Ascending aorta (tissue), 2 donors: ENCODE measurements at regions of chrX and their contacts with region 1.

Region 1: GRCh38 chrX:151396825-151397740 is at the start of gene VMA21:
- DNase-seq: peak; percentile 49 to 92
- H3K4me3 ChIP-seq: peak within 1 kb of the TSS; percentile 75 to 82
- H3K27ac ChIP-seq: peak within 1 kb of the TSS; percentile 87 to 94
- H3K4me1 ChIP-seq: no peaks in the 10 kb centered on the region
- H3K27me3 ChIP-seq: no peaks in the 10 kb centered on the region
- CTCF ChIP-seq: no peak
- total RNA-seq, gene VMA21: 10.0 TPM

Region 2: DNA sequence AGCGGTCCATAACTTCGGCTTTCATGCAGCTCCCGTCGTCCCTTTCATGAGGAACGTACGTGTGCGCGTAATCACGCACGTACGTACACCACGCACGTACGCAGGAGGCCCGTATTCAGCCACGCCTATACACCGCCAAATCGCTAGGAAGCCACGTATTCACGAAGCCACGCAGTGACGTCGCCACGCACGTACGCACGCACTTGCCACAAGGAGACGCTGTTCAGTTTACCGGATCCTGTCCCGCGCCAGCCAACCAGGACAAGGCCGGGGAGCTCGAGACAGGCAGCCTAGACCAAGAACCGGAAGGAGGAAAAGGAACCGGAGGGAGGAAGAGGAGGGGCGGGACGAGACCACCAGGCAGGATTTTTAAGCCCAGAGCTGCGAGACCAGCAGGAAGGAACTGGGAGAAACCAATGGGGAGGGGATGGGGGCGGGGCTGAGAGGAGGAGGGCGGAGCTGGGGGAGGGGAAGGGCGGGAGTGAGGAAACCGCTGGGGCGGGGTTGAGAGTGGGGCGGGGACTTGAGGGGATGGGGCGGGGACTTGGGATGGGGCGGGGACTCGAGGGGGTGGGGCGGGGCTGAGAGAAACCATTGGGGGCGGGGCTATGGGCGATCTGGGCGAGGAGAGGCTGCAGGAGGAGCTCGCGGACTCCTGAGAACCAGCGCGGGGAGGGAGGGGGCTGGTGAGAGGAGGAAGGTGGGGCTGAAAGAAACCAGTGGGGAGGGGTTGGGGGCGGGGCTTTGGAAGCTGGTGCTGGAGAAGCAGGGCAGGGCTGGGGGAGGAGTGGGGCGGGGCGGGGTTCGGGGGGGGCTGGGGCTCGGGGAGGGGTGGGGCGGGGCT is 1458.4 kb before region 1 on chrX and contains the start of gene EOLA2:
- intact Hi-C with region 1: loop called (anchors 10 kb)
- DNase-seq: peak; percentile 91 to 97
- H3K4me3 ChIP-seq: peak within 1 kb of the TSS; percentile 52 to 77
- H3K27ac ChIP-seq: peak within 1 kb of the TSS; percentile 91 to 96
- H3K4me1 ChIP-seq: peaks cover 0 to 4% of the 10 kb centered on the region in 2 donors
- H3K27me3 ChIP-seq: no peaks in the 10 kb centered on the region
- CTCF ChIP-seq: peak; percentile 36 to 56 (median 54)
- total RNA-seq, gene EOLA2: 22.8 TPM

Region 3: GRCh38 chrX:150693775-150694574 is 703.1 kb before region 1 on chrX:
- intact Hi-C with region 1: loop called (anchors 10 kb)
- DNase-seq: peak in 1 of 2 donors; percentile 77
- H3K4me3 ChIP-seq: peak overlapping the region; percentile 66 to 72
- H3K27ac ChIP-seq: peak overlapping the region; percentile 91 to 93
- H3K4me1 ChIP-seq: no peaks in the 10 kb centered on the region
- H3K27me3 ChIP-seq: no peaks in the 10 kb centered on the region
- CTCF ChIP-seq: no peak

Region 4: DNA sequence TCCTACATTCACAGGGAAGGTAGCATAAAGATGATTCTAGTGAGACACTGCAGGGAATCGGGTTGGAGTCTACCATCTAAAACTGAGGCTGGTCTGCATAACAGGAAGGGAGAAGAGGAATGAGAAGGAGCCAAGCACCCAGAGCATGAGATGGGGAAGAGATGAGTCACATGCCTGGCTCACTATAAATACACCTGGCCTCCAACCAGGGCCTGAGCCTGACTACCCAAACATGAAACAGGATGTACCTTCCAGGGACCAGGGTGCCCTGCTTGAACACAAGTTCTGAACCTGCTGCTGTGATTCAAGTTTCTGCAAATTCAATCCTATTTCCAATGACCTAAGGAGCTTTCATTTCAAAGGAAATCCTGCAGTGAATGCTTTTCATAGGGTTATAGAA is 523.5 kb before region 1 on chrX:
- intact Hi-C with region 1: loop called (anchors 10 kb)
- DNase-seq: peak; percentile 17 to 76
- H3K4me3 ChIP-seq: no peak overlapping the region
- H3K27ac ChIP-seq: peak overlapping the region; percentile 70 to 76
- H3K4me1 ChIP-seq: peaks cover 0 to 2% of the 10 kb centered on the region in 2 donors
- H3K27me3 ChIP-seq: no peaks in the 10 kb centered on the region
- CTCF ChIP-seq: no peak

Region 5: DNA sequence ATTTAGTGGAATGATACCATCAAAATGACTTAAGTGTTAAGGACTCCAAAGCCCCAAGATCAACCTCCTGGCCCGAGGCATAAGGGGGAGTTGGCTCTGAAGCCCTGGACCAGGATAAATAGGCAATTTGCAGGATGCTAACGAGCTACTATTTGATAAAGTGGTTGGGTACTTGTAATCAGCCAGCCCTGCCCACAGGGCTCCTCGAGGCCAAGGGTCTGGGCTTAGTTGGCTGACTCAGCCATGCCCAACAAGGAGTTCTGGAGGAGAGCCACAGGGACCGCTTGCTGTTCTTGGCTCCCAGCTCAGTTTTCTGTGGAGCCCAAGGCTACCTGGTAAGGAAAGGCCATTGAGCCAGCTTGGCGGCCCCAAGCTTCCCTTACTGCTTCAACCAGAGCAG is 406.2 kb before region 1 on chrX:
- intact Hi-C with region 1: no loop called
- DNase-seq: no peak
- H3K4me3 ChIP-seq: no peak overlapping the region
- H3K27ac ChIP-seq: no peak overlapping the region
- H3K4me1 ChIP-seq: no peaks in the 10 kb centered on the region
- H3K27me3 ChIP-seq: no peaks in the 10 kb centered on the region
- CTCF ChIP-seq: no peak

Region 6: DNA sequence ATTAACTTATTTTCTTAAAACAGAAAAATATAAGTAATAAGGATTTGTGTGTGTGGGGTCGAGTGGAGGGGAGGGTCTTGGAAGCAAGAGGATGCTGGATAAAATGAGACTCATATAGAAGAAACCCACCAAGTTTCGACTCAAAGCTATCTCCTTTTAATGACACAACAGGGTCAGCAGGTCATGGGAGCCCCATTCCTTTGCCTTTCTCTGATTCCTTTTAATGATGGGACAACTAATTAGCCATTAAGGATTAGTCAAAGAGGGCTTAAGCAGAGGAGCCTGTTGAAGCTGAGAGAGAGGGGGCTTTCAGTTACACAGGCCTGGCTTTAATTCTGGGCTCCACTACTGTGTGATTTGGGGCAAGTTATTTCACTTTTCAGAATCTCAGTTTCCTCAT is 117.9 kb before region 1 on chrX:
- intact Hi-C with region 1: no loop called
- DNase-seq: no peak
- H3K4me3 ChIP-seq: no peak overlapping the region
- H3K27ac ChIP-seq: no peak overlapping the region
- H3K4me1 ChIP-seq: no peaks in the 10 kb centered on the region
- H3K27me3 ChIP-seq: no peaks in the 10 kb centered on the region
- CTCF ChIP-seq: no peak

Region 7: GRCh38 chrX:151974336-151975227 is 577.5 kb after region 1 on chrX and contains the start of gene GABRE:
- intact Hi-C with region 1: loop called (anchors 5 kb)
- DNase-seq: peak in 1 of 2 donors; percentile 76
- H3K4me3 ChIP-seq: peak within 1 kb of the TSS; percentile 53 to 84
- H3K27ac ChIP-seq: peak within 1 kb of the TSS; percentile 73 to 79
- H3K4me1 ChIP-seq: no peaks in the 10 kb centered on the region
- H3K27me3 ChIP-seq: no peaks in the 10 kb centered on the region
- CTCF ChIP-seq: no peak
- total RNA-seq, gene GABRE: 13.5 TPM

Region 8: DNA sequence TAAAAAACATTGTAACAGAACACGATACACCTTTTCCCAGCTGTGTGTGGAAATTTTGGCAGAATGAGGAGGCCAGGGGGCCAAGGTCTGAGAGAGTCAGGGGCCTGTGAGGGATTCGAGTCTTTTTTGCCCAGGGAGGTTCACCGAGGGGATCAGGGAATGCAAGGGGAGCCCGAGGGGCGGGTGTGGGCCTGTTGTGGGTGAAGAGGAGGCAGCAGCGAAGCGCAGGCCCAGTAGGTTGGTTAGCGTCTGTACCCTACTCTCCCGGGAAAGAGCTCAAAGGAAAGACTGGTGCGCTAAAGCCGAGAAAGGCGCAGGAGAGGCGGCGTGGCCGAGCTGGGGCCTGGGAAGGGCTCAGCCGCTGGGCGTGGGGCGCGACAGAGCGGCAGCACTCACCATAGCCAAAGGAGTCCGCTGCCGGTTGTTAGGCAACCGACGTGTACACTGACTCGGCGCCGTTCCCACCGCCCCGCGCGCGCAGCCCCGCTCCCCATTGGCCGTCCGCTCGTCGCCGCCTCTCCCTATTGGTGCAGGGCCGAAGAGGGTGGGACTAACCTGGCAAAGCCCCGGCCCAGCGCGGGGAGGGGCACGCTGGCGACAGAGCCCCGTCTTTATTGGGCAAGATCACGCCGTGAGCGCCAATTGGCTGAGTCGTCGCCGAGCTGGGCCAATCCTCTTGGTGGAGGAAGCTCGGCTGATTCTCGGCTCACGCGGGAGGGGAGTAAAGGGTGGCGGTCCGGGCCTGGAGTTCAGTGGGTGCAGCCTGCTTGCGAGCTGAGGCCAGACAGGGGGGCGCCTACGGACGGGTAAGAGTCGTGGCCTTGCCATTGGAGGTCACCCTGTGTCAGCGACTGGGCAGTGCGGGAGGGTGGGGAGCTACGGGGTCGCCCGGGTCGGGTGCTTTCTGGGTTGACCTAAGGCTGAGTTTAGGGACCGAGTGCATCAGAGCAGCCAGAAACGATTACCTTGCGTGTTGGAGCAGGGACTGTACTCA is 1433.5 kb after region 1 on chrX and contains the starts of genes CETN2 and NSDHL:
- intact Hi-C with region 1: loop called (anchors 5 kb)
- DNase-seq: peak; percentile 86 to 97
- H3K4me3 ChIP-seq: peak within 1 kb of the TSS; percentile 53 to 69
- H3K27ac ChIP-seq: peak within 1 kb of the TSS; percentile 41 to 55
- H3K4me1 ChIP-seq: peaks cover 0 to 3% of the 10 kb centered on the region in 2 donors
- H3K27me3 ChIP-seq: no peaks in the 10 kb centered on the region
- CTCF ChIP-seq: no peak
- total RNA-seq, gene CETN2: 7.8 TPM
- total RNA-seq, gene NSDHL: 8.8 TPM

Region 9: GRCh38 chrX:153333768-153334645 is 1936.9 kb after region 1 on chrX and contains the start of gene ZNF275:
- intact Hi-C with region 1: loop called (anchors 5 kb)
- DNase-seq: peak in 1 of 2 donors; percentile 88
- H3K4me3 ChIP-seq: peak within 1 kb of the TSS; percentile 70
- H3K27ac ChIP-seq: peak within 1 kb of the TSS in 1 of 2 donors; percentile 37
- H3K4me1 ChIP-seq: peaks cover 0 to 5% of the 10 kb centered on the region in 2 donors
- H3K27me3 ChIP-seq: no peaks in the 10 kb centered on the region
- CTCF ChIP-seq: no peak
- total RNA-seq, gene ZNF275: 2.2 TPM